ENCODE measurements at regions of chrX and their contacts with region 1.

Region 1: GRCh38 chrX:151151665-151152267 is 24.6 kb upstream of the GPR50 start:
- DNase-seq: peak; percentile 31
- H3K4me3 ChIP-seq: no peak overlapping the region
- H3K27ac ChIP-seq: no peak overlapping the region
- H3K4me1 ChIP-seq: no peaks in the 10 kb centered on the region
- H3K27me3 ChIP-seq: peaks cover 3% of the 10 kb centered on the region
- CTCF ChIP-seq: peak; percentile 52 to 69

Region 2: DNA sequence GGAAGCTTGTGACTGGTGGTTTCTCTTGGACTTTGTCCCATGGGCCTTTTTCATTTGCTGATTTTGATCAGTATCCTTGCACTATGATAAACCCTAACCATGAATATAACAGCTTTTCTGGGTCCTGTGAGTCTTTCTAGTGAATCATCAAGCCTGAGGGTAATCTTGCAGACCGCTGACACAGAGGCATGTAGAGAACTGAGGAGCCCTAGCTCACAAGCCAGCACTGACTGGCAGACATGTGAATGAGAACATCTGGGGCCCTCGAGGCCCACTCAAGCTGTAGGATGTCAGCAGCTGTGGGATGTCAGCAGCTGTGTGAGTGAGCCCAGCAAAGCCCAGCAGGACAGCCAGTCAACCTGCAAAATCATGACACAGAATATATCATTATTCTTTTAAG is 131.9 kb before region 1 on chrX:
- CTCF ChIA-PET with region 1: no interaction called
- dilution Hi-C with region 1: no loop called
- in situ Hi-C with region 1: no loop called
- intact Hi-C with region 1: no loop called
- DNase-seq: peak; percentile 59
- H3K4me3 ChIP-seq: no peak overlapping the region
- H3K27ac ChIP-seq: no peak overlapping the region
- H3K4me1 ChIP-seq: no peaks in the 10 kb centered on the region
- H3K27me3 ChIP-seq: no peaks in the 10 kb centered on the region
- CTCF ChIP-seq: no peak

Region 3: DNA sequence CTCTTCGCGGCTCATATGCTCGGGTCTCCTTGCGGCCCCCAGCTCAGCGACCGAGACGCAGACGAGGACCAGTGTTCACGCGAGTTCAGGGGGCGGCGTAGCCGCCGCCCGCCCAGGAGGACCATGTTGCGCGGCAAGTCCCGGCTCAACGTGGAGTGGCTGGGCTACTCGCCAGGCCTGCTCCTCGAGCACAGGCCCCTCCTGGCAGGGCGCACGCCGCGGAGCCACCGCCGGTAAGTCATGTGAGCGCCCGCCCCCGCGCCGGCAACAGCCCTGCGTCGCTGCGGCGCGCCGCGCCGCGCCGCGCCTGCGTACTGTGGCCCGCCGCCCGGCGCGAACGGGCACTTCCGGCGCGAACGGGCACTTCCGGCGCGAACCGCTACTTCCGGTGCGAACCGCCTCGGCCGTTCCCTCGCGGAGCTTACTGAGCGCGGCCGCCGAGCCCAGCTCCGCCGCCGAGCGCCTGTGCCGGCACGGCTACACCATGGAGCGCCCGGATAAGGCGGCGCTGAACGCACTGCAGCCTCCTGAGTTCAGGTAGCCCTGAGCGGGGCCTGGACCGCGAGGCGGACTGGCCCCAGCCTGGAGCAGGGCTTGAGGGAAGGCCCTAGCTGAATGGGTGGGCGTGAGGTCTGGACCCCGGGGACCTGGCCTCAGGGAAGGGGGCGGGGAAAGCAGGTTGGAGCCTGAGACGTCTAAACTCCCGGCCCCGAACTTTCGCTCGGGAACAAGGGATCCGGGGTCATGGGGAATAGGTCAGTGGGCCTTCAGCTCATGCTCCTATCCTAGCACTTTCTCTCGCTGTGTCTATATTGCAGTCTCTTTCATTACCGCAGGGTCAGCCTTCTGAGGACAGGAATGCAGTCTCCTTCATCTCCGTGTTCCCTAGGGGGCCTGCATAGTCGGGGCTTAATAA is 245.3 kb after region 1 on chrX and contains the start of gene VMA21:
- CTCF ChIA-PET with region 1: no interaction called
- dilution Hi-C with region 1: no loop called
- in situ Hi-C with region 1: no loop called
- intact Hi-C with region 1: loop called (anchors 5 kb)
- DNase-seq: peak; percentile 71
- H3K4me3 ChIP-seq: peak within 1 kb of the TSS; percentile 69 to 84 (median 77)
- H3K27ac ChIP-seq: peak within 1 kb of the TSS; percentile 75
- H3K4me1 ChIP-seq: no peaks in the 10 kb centered on the region
- H3K27me3 ChIP-seq: no peaks in the 10 kb centered on the region
- CTCF ChIP-seq: no peak
- total RNA-seq, gene VMA21: 40.5 to 73.3 TPM

Region 4: GRCh38 chrX:151505796-151506195 is 354.0 kb after region 1 on chrX:
- CTCF ChIA-PET with region 1: no interaction called
- dilution Hi-C with region 1: no loop called
- in situ Hi-C with region 1: no loop called
- intact Hi-C with region 1: loop called (anchors 2 kb)
- DNase-seq: peak; percentile 21
- H3K4me3 ChIP-seq: no peak overlapping the region
- H3K27ac ChIP-seq: no peak overlapping the region
- H3K4me1 ChIP-seq: no peaks in the 10 kb centered on the region
- H3K27me3 ChIP-seq: no peaks in the 10 kb centered on the region
- CTCF ChIP-seq: peak; percentile 54 to 69

Region 5: DNA sequence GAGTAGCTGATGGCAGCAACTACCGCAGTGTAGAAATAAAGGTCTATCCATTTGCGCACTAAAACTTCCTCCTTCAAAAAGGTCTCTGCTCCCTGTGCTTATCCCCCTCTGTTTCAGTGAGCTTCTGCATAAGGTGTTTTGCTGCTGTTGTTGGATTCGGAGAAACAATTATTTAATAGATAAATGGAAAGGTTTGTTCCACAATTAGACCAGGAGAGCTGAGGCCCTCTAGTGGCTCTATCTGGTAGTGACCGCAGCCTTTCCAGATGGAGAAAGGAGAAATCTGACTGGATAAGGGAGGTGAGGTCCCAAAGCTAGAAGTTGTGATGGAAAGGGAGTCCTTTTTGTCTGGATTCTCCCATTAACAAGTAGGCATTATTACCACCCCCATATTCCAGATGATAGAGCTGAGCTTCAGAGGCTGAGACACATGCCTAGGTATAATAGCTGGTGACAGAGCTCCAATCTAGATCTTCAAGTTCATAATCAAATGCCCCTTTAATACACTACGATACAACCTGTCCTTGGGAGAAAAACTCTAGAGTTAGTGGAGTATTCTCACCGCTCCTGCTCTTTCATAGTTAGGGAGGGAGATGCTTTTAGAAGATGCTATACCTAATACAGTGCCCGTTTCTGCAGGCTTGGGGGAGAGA is 1480.8 kb after region 1 on chrX:
- CTCF ChIA-PET with region 1: no interaction called
- dilution Hi-C with region 1: no loop called
- in situ Hi-C with region 1: no loop called
- intact Hi-C with region 1: loop called (anchors 2 kb)
- DNase-seq: peak; percentile 23
- H3K4me3 ChIP-seq: no peak overlapping the region
- H3K27ac ChIP-seq: no peak overlapping the region
- H3K4me1 ChIP-seq: no peaks in the 10 kb centered on the region
- H3K27me3 ChIP-seq: no peaks in the 10 kb centered on the region
- CTCF ChIP-seq: peak; percentile 79